Activated CD4-positive, alpha-beta memory T cell treated with anti-CD3 and anti-CD28 coated beads for 36 hours (primary cell): ENCODE measurements at regions of chr11 and their contacts with region 1.

Region 1: GRCh38 chr11:108237058-108237481 is 14.2 kb downstream of the ATM start:
- DNase-seq: no peak
- H3K4me3 Mint-ChIP-seq: peak overlapping the region; percentile 31
- H3K27ac Mint-ChIP-seq: peak overlapping the region; percentile 76
- H3K4me1 Mint-ChIP-seq: peaks cover 72% of the 10 kb centered on the region
- H3K27me3 Mint-ChIP-seq: no peaks in the 10 kb centered on the region

Region 2: DNA sequence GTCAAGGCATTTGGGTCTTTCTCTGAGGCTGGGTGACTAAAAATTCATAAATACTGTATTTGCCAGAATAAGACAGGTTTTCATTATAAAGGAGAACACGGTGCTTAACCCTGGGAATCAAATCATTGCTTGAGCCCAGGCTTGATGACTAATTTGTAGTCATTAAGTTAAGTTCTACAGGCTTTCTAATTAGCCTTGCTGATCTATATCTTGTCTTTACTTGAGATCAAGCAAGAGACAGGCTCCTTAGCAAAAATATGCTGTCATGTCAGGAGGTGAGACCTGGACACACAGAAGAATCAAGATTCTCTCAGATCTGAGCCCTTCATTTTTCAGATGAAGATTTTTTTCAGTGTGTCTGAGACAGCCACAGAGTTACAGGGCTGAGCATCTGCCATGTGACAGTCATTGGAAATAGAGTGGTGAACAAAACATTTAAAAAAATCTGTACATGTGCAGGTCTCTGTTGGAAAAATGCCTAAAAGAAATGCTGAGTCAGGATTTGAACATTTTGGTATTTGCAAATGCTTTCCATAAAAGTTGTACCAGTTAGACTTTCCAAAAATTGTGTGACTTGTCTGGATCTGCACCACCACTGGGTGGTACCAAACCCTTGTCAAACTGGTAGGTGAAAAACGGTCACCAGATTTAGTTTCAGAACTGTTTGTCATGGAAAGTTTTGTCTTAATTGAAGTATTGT is 101.1 kb before region 1 on chr11:
- CTCF ChIA-PET with region 1: no interaction called
- POLR2A ChIA-PET with region 1: no interaction called
- intact Hi-C with region 1: loop called (anchors 1 kb)
- DNase-seq: peak; percentile 55
- H3K4me3 Mint-ChIP-seq: no peak overlapping the region
- H3K27ac Mint-ChIP-seq: peak overlapping the region; percentile 68
- H3K4me1 Mint-ChIP-seq: peaks cover 24% of the 10 kb centered on the region
- H3K27me3 Mint-ChIP-seq: no peaks in the 10 kb centered on the region

Region 3: GRCh38 chr11:108204929-108205499 is 32.1 kb before region 1 on chr11:
- CTCF ChIA-PET with region 1: interaction called, 4 read pairs
- POLR2A ChIA-PET with region 1: interaction called, 4 read pairs
- intact Hi-C with region 1: loop called (anchors 1 kb)
- DNase-seq: no peak
- H3K4me3 Mint-ChIP-seq: no peak overlapping the region
- H3K27ac Mint-ChIP-seq: peak overlapping the region; percentile 9
- H3K4me1 Mint-ChIP-seq: peaks cover 70% of the 10 kb centered on the region
- H3K27me3 Mint-ChIP-seq: no peaks in the 10 kb centered on the region

Region 4: GRCh38 chr11:108278546-108278945 is 41.5 kb after region 1 on chr11:
- CTCF ChIA-PET with region 1: no interaction called
- POLR2A ChIA-PET with region 1: no interaction called
- intact Hi-C with region 1: loop called (anchors 5 kb)
- DNase-seq: no peak
- H3K4me3 Mint-ChIP-seq: no peak overlapping the region
- H3K27ac Mint-ChIP-seq: peak overlapping the region; percentile 29
- H3K4me1 Mint-ChIP-seq: peaks cover 47% of the 10 kb centered on the region
- H3K27me3 Mint-ChIP-seq: no peaks in the 10 kb centered on the region

Region 5: GRCh38 chr11:108497317-108498045 is 260.4 kb after region 1 on chr11:
- CTCF ChIA-PET with region 1: no interaction called
- POLR2A ChIA-PET with region 1: no interaction called
- intact Hi-C with region 1: loop called (anchors 5 kb)
- DNase-seq: peak; percentile 87
- H3K4me3 Mint-ChIP-seq: peak overlapping the region; percentile 95
- H3K27ac Mint-ChIP-seq: peak overlapping the region; percentile 99
- H3K4me1 Mint-ChIP-seq: peaks cover 16% of the 10 kb centered on the region
- H3K27me3 Mint-ChIP-seq: no peaks in the 10 kb centered on the region